AG04449 (cell line): ENCODE measurements at regions of chr2 and their contacts with region 1.

Region 1: GRCh38 chr2:168920504-168921157 is 19.5 kb downstream of the G6PC2 start:
- DNase-seq: no peak
- H3K4me3 ChIP-seq: no peak overlapping the region
- CTCF ChIP-seq: peak; percentile 27

Region 2: GRCh38 chr2:168773719-168774521 is 146.7 kb before region 1 on chr2:
- CTCF ChIA-PET with region 1: interaction called, 45 read pairs
- POLR2A ChIA-PET with region 1: no interaction called
- DNase-seq: no peak
- H3K4me3 ChIP-seq: no peak overlapping the region
- CTCF ChIP-seq: peak; percentile 78

Region 3: GRCh38 chr2:168907940-168908662 is 12.5 kb before region 1 on chr2:
- CTCF ChIA-PET with region 1: interaction called, 16 read pairs
- POLR2A ChIA-PET with region 1: no interaction called
- DNase-seq: no peak
- H3K4me3 ChIP-seq: no peak overlapping the region
- CTCF ChIP-seq: no peak